ENCODE measurements at regions of chr14 and their contacts with region 1.

Region 1: GRCh38 chr14:91317381-91318308 is 73.1 kb upstream of the GPR68 start:
- DNase-seq: peak; percentile 91
- ATAC-seq: peak; percentile 60
- H3K4me3 Mint-ChIP-seq: peak overlapping the region; percentile 51
- H3K27ac Mint-ChIP-seq: peak overlapping the region; percentile 96
- H3K4me1 Mint-ChIP-seq: peaks cover 78% of the 10 kb centered on the region
- H3K27me3 Mint-ChIP-seq: no peaks in the 10 kb centered on the region

Region 2: GRCh38 chr14:91127401-91127854 is 190.2 kb before region 1 on chr14:
- CTCF ChIA-PET with region 1: no interaction called
- DNase-seq: no peak
- ATAC-seq: peak; percentile 20
- H3K4me3 Mint-ChIP-seq: no peak overlapping the region
- H3K27ac Mint-ChIP-seq: peak overlapping the region; percentile 19
- H3K4me1 Mint-ChIP-seq: peaks cover 38% of the 10 kb centered on the region
- H3K27me3 Mint-ChIP-seq: no peaks in the 10 kb centered on the region

Region 3: DNA sequence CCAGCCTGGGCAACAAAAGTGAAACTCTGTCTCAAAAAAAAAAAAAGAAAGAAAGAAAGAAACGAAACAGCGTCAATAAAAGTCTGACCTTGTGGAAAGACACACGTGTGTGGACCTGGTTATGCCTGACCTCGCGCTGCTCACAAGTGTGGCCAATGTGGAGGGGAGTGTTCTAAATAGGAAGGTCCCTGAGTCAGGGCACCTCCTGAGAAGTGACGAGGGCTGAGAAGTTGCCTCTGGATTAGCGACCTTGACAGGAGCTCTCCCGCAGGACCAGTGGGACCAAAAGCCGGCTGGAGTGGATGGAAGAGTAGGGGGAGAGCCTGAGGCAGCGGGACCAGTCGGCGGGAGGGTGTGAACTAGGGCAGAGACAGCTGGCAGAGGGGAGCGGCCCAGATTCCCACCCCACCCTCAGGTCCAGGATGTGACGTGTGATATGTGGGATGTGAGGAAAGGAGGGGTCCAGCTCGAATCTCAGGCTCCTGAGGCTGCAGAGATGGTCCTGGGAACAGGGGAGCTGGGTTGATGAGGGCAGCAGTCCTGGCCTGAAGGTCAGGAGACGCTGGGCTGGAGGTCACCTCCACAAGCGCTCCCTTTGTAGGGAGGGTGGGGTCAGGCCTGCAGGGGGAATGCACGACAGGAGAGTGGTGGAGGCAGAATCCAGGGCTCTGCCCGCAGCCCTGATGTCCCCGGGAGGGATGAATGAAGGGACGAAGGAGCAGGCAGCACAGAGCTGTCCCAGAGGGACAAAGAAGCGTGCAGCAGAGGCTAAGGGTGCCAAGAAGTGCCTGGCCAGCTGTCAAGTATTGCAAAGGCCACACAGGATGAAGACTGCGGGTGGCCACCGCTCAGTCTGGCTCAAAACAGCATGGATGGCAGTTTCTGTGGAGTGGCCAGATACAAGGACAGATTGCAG is 48.3 kb before region 1 on chr14:
- CTCF ChIA-PET with region 1: no interaction called
- DNase-seq: no peak
- ATAC-seq: no peak
- H3K4me3 Mint-ChIP-seq: no peak overlapping the region
- H3K27ac Mint-ChIP-seq: peak overlapping the region; percentile 29
- H3K4me1 Mint-ChIP-seq: peaks cover 13% of the 10 kb centered on the region
- H3K27me3 Mint-ChIP-seq: no peaks in the 10 kb centered on the region

Region 4: DNA sequence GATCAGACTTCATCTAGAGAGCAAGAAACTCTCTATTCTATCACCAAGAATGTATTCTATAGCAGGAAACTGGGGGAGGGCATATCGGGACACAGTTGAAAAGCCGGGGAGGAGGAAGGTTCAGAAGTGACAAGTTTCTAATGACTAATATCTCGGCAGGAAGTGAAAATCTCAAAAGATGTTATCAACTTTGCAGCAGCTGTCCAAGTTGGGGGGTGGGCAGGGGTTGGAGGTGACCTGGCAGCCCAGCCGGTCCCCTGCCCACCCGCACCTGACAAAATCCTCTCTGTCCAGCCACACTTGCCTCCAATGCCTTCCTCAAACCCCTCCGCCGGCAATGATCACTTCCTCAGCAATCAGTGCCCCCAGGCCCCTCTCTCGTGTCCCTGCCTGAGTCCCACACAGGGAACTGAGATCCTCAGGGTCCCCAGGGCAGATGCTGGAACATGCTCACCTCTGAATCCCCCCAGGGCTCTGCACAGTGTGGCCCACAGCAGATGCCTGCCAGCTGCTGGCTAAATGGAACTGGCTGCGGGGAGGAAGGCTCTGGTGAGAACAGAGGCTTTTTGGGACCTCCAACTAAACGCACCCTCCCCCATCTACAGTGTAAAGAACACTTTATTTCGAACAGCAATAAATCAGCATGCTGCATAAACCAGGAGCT is 56.1 kb after region 1 on chr14:
- CTCF ChIA-PET with region 1: interaction called, 28 read pairs
- DNase-seq: peak; percentile 81
- ATAC-seq: peak; percentile 57
- H3K4me3 Mint-ChIP-seq: peak overlapping the region; percentile 70
- H3K27ac Mint-ChIP-seq: peak overlapping the region; percentile 96
- H3K4me1 Mint-ChIP-seq: peaks cover 100% of the 10 kb centered on the region
- H3K27me3 Mint-ChIP-seq: no peaks in the 10 kb centered on the region

Measured in activated CD8-positive, alpha-beta memory T cell treated with anti-CD3 and anti-CD28 coated beads, Interleukin-2, amount 10 ng/mL, durations not matched to agents 7 days and 5 days (primary cell).